Motor neuron (in vitro differentiated cells): ENCODE measurements at regions of chr12 and their contacts with region 1.

Region 1: DNA sequence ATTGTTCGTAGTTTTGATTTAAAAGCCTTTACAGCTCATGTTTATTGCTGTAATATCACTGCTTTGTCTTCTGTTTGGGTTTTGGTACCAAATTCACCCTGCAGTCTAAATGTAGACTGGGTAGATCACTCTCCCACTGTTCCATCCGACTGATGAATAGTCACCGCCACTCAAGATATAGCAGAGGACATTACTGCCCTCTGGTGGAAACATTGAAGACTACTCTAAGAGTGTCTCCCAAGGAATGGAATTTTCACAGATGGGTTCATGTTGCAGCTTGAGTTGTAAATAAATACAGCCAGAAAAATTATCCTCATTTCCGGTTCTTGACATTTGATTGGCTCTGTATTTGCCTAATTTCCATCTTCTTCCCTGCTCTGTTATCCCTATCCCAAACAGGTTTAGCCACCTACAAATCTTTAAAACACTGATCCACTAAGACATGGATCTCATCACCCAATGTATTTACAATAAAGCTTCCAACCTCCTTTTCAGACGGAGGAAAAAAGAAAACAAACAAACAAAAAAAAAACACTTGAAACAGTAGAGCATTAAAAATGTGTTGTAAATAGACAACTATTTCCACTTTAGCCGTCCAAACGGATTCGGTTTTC is 198.3 kb upstream of the CPNE8 start:
- ATAC-seq: peak; percentile 74 to 98 (median 88)
- H3K4me3 ChIP-seq: no peak overlapping the region
- H3K27ac ChIP-seq: no peak overlapping the region
- H3K4me1 ChIP-seq: no peaks in the 10 kb centered on the region

Region 2: GRCh38 chr12:38771871-38772270 is 331.8 kb before region 1 on chr12:
- in situ Hi-C with region 1: no loop called
- ATAC-seq: peak in 1 of 8 experiments; percentile 36
- H3K4me3 ChIP-seq: no peak overlapping the region
- H3K27ac ChIP-seq: no peak overlapping the region
- H3K4me1 ChIP-seq: no peaks in the 10 kb centered on the region

Region 3: GRCh38 chr12:38921025-38921677 is 182.5 kb before region 1 on chr12:
- in situ Hi-C with region 1: loop called in 6 of 9 experiments (anchors 10 to 25 kb)
- ATAC-seq: peak in 6 of 8 experiments; percentile 49 to 95 (median 78)
- H3K4me3 ChIP-seq: no peak overlapping the region
- H3K27ac ChIP-seq: no peak overlapping the region
- H3K4me1 ChIP-seq: no peaks in the 10 kb centered on the region

Region 4: GRCh38 chr12:38969706-38970105 is 134.0 kb before region 1 on chr12:
- in situ Hi-C with region 1: no loop called
- ATAC-seq: no peak
- H3K4me3 ChIP-seq: no peak overlapping the region
- H3K27ac ChIP-seq: no peak overlapping the region
- H3K4me1 ChIP-seq: no peaks in the 10 kb centered on the region

Region 5: GRCh38 chr12:40107098-40107802 is 1003.6 kb after region 1 on chr12:
- in situ Hi-C with region 1: no loop called
- ATAC-seq: peak in 6 of 8 experiments; percentile 7 to 21 (median 8)
- H3K4me3 ChIP-seq: no peak overlapping the region
- H3K27ac ChIP-seq: no peak overlapping the region
- H3K4me1 ChIP-seq: peaks cover 7 to 19% of the 10 kb centered on the region in 2 donors